ENCODE measurements at regions of chr22 and their contacts with region 1.

Region 1: GRCh38 chr22:46071451-46072109 is 78.7 kb upstream of the PPARA start:
- DNase-seq: peak; percentile 33
- H3K4me3 Mint-ChIP-seq: peak overlapping the region; percentile 84
- H3K27ac Mint-ChIP-seq: peak overlapping the region; percentile 86
- H3K4me1 Mint-ChIP-seq: peaks cover 42% of the 10 kb centered on the region
- H3K27me3 Mint-ChIP-seq: no peaks in the 10 kb centered on the region

Region 2: DNA sequence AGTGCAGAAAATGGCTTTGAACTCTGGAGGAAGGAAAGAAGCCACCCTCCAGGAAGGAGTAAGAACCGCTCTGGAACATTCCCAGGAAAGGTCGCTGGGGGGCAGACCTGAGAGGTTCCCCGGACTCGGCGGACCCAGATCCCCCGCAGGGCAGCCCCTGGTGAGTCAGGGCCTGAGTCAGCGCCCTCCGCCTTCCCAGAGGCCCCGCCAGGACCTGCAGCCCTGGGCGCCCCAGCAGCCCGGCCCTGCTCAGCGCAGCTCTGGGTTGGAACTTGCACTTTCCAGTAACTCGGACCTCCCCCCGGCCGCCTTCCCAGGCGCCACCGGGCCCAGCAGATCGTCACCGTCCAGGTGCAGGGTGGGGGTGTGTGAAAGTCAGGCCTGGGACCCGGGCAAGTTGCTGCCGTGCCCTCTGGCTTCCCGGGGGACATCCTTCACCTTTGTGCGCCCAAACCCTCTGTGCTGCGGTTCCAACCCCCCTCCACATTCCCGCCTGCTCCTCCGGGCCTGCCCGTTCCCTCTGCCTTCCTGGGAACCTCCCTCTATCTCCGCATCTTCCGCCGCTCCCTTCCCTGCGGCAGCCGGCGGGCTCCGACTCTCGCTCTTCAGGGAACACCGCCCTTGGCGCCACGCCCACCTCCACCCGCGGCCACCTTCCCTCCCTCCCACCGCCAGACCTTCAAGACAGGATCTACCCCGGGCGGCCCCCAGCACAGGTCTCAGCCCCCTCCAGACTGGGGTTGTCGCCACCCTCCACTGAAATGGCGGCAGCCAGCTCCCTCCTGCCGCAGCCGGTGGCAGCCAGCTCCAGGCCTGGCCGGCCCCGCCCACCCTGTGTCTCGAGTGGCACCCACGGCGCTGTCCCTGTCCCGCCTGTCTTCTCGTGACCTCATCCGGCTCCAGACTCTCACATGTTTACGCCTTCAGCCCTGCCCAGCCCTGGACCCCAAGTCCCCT is 57.8 kb before region 1 on chr22:
- intact Hi-C with region 1: loop called (anchors 2 kb)
- DNase-seq: peak; percentile 60
- H3K4me3 Mint-ChIP-seq: peak overlapping the region; percentile 83
- H3K27ac Mint-ChIP-seq: peak overlapping the region; percentile 77
- H3K4me1 Mint-ChIP-seq: peaks cover 5% of the 10 kb centered on the region
- H3K27me3 Mint-ChIP-seq: peaks cover 6% of the 10 kb centered on the region

Region 3: GRCh38 chr22:46054091-46055073 is 17.2 kb before region 1 on chr22:
- intact Hi-C with region 1: loop called (anchors 2 kb)
- DNase-seq: peak; percentile 41
- H3K4me3 Mint-ChIP-seq: peak overlapping the region; percentile 84
- H3K27ac Mint-ChIP-seq: peak overlapping the region; percentile 95
- H3K4me1 Mint-ChIP-seq: peaks cover 34% of the 10 kb centered on the region
- H3K27me3 Mint-ChIP-seq: no peaks in the 10 kb centered on the region

Region 4: GRCh38 chr22:46108564-46109473 is 37.2 kb after region 1 on chr22:
- intact Hi-C with region 1: no loop called
- DNase-seq: no peak
- H3K4me3 Mint-ChIP-seq: no peak overlapping the region
- H3K27ac Mint-ChIP-seq: no peak overlapping the region
- H3K4me1 Mint-ChIP-seq: no peaks in the 10 kb centered on the region
- H3K27me3 Mint-ChIP-seq: no peaks in the 10 kb centered on the region

Measured in activated T-helper 2 cell treated with anti-CD3 and anti-CD28 coated beads, Interferon-gamma antibody, Interleukin-2, Interleukin-4, amounts not matched to agents 10 μg/mL and 5 μg/mL and 100 μg/mL, durations not matched to agents 14 hours and 24 hours and 36 hours (primary cell).